ENCODE measurements at regions of chrX and their contacts with region 1.

Region 1: GRCh38 chrX:13646154-13646549 is 6.8 kb upstream of the TCEANC start:
- DNase-seq: peak; percentile 37 to 57 (median 43)
- H3K4me3 ChIP-seq: no peak overlapping the region
- H3K27ac ChIP-seq: no peak overlapping the region
- H3K4me1 ChIP-seq: no peaks in the 10 kb centered on the region
- H3K27me3 ChIP-seq: no peaks in the 10 kb centered on the region
- CTCF ChIP-seq: no peak
- EP300 ChIP-seq: no peak
- POLR2A ChIP-seq: no peak

Region 2: GRCh38 chrX:13432414-13433297 is 213.5 kb before region 1 on chrX:
- intact Hi-C with region 1: no loop called
- DNase-seq: peak in 3 of 5 donors; percentile 22 to 65 (median 46)
- H3K4me3 ChIP-seq: no peak overlapping the region
- H3K27ac ChIP-seq: peak overlapping the region in 1 of 2 donors; percentile 50
- H3K4me1 ChIP-seq: peaks cover 3% of the 10 kb centered on the region
- H3K27me3 ChIP-seq: no peaks in the 10 kb centered on the region
- CTCF ChIP-seq: no peak
- EP300 ChIP-seq: no peak
- POLR2A ChIP-seq: no peak

Region 3: GRCh38 chrX:13495232-13495631 is 150.9 kb before region 1 on chrX:
- intact Hi-C with region 1: loop called in 3 of 4 experiments (anchors 10 kb)
- DNase-seq: no peak
- H3K4me3 ChIP-seq: no peak overlapping the region
- H3K27ac ChIP-seq: no peak overlapping the region
- H3K4me1 ChIP-seq: no peaks in the 10 kb centered on the region
- H3K27me3 ChIP-seq: no peaks in the 10 kb centered on the region
- CTCF ChIP-seq: no peak
- EP300 ChIP-seq: no peak
- POLR2A ChIP-seq: no peak

Region 4: GRCh38 chrX:13506574-13506973 is 139.6 kb before region 1 on chrX:
- intact Hi-C with region 1: loop called in 2 of 4 experiments (anchors 10 kb)
- DNase-seq: peak; percentile 21 to 63 (median 53)
- H3K4me3 ChIP-seq: no peak overlapping the region
- H3K27ac ChIP-seq: no peak overlapping the region
- H3K4me1 ChIP-seq: no peaks in the 10 kb centered on the region
- H3K27me3 ChIP-seq: no peaks in the 10 kb centered on the region
- CTCF ChIP-seq: peak; percentile 40 to 47 (median 47)
- EP300 ChIP-seq: no peak
- POLR2A ChIP-seq: no peak